ENCODE measurements at regions of chr6 and their contacts with region 1.

Region 1: DNA sequence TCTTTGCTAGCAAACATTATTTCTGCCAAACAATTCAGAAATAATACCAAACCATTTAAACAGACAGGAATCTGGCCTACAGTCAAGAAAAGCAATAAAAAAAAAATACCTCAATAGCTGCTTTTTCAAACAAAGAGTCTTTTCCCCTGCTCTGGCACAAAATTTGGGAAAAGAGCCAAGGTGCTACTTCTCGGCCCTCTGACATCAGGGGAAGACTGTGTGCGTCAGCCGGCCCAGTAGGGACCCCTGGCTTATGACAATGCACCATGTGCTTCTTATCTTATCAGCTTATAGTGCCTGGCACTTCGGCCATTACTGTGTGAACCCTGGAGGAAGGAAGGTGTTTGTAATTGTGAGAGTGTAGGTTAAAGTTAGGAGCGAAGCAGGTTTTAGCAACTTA is 89.4 kb downstream of the PDE10A start:
- DNase-seq: peak in 1 of 2 donors; percentile 25
- H3K4me3 ChIP-seq: no peak overlapping the region
- H3K27ac ChIP-seq: no peak overlapping the region
- H3K4me1 ChIP-seq: peaks cover 0 to 4% (median 0%) of the 10 kb centered on the region in 4 donors
- H3K27me3 ChIP-seq: no peaks in the 10 kb centered on the region
- CTCF ChIP-seq: no peak

Region 2: GRCh38 chr6:164453835-164454234 is 1119.8 kb before region 1 on chr6:
- intact Hi-C with region 1: loop called (anchors 5 kb)
- DNase-seq: no peak
- H3K4me3 ChIP-seq: no peak overlapping the region
- H3K27ac ChIP-seq: no peak overlapping the region
- H3K4me1 ChIP-seq: no peaks in the 10 kb centered on the region
- H3K27me3 ChIP-seq: no peaks in the 10 kb centered on the region
- CTCF ChIP-seq: no peak

Measured in tibial artery (tissue), 4 donors.